H1 (cell line): ENCODE measurements at regions of chr14 and their contacts with region 1.

Region 1: DNA sequence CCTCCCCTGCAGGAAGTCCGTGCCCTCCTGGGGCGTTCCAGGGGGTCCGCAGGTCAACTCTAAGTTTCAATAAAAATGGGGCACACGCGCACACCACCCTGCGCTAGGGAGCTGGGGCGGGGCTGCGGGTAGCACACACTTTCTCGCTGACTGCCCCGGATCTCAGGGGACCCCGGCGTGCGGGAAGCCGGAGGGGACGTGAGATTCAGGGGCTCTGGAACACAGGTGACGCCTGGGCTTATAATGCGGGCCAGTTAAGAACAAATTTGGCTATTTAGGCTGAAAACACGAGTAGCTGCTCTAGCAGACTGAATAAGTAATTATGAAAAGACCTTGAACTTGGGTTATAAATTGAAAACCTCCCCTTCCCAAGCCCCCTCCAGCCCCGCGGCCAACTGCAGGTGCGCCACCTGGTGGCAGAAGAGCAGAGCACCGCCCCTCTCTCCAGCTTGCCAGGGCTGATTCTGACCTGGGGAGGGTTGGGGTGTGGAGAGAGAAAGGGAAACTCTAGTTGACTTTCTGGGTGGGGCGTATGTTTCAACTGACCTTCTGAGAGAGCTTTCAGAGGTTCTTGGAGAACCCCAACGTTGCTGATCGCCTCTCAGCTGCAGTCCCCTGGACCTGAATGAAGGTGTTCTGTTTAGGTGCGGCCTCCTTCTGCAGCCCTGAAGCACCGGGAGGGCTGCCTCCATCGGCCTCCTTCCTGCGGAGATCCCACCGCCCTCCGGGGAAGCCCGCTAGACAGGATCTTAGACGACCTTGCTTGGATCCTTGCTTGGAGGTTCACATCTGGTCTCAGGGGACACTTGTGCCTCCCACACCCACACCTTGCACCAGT is 118.4 kb upstream of the EVL start:
- DNase-seq: peak in 1 of 2 experiments; percentile 88
- H3K4me3 ChIP-seq: peak overlapping the region; percentile 14 to 55 (median 21); a peak in 5 of 8 replicates
- H3K27ac ChIP-seq: no peak overlapping the region
- H3K4me1 ChIP-seq: peaks cover 0 to 22% (median 4%) of the 10 kb centered on the region in 4 experiments; a peak in 5 of 7 replicates
- H3K27me3 ChIP-seq: 0 out of 7 replicates have a peak, but pooled peaks cover 0 to 3% (median 0%) of the 10 kb centered on the region in 4 experiments
- CTCF ChIP-seq: peak; percentile 83 to 96 (median 90)
- EP300 ChIP-seq: no peak
- POLR2A ChIP-seq: no peak
- RAD21 ChIP-seq: peak; percentile 52 to 70

Region 2: GRCh38 chr14:99807413-99808153 is 139.3 kb before region 1 on chr14:
- CTCF ChIA-PET with region 1: interaction called, 12 read pairs
- POLR2A ChIA-PET with region 1: no interaction called
- DNase-seq: no peak
- H3K4me3 ChIP-seq: no peak overlapping the region
- H3K27ac ChIP-seq: no peak overlapping the region
- H3K4me1 ChIP-seq: no peaks in the 10 kb centered on the region; a peak in 1 of 7 replicates
- H3K27me3 ChIP-seq: no peaks in the 10 kb centered on the region
- CTCF ChIP-seq: peak; percentile 59 to 93 (median 68)
- EP300 ChIP-seq: no peak
- POLR2A ChIP-seq: no peak
- RAD21 ChIP-seq: peak in 1 of 2 experiments; percentile 50; a peak in 3 of 4 replicates

Region 3: GRCh38 chr14:99910337-99911309 is 36.2 kb before region 1 on chr14:
- CTCF ChIA-PET with region 1: interaction called, 14 read pairs
- POLR2A ChIA-PET with region 1: no interaction called
- DNase-seq: no peak
- H3K4me3 ChIP-seq: no peak overlapping the region
- H3K27ac ChIP-seq: no peak overlapping the region
- H3K4me1 ChIP-seq: no peaks in the 10 kb centered on the region
- H3K27me3 ChIP-seq: no peaks in the 10 kb centered on the region
- CTCF ChIP-seq: no peak
- EP300 ChIP-seq: no peak
- POLR2A ChIP-seq: no peak
- RAD21 ChIP-seq: no peak

Region 4: GRCh38 chr14:99931308-99931707 is 15.6 kb before region 1 on chr14:
- CTCF ChIA-PET with region 1: interaction called, 10 read pairs
- POLR2A ChIA-PET with region 1: interaction called, 3 read pairs
- DNase-seq: no peak
- H3K4me3 ChIP-seq: no peak overlapping the region
- H3K27ac ChIP-seq: no peak overlapping the region
- H3K4me1 ChIP-seq: peaks cover 0 to 2% (median 0%) of the 10 kb centered on the region in 4 experiments; a peak in 1 of 7 replicates
- H3K27me3 ChIP-seq: no peaks in the 10 kb centered on the region
- CTCF ChIP-seq: no peak
- EP300 ChIP-seq: no peak
- POLR2A ChIP-seq: no peak
- RAD21 ChIP-seq: no peak

Region 5: GRCh38 chr14:99958380-99958779 is 11.5 kb after region 1 on chr14:
- CTCF ChIA-PET with region 1: interaction called, 24 read pairs
- POLR2A ChIA-PET with region 1: no interaction called
- DNase-seq: no peak
- H3K4me3 ChIP-seq: no peak overlapping the region
- H3K27ac ChIP-seq: no peak overlapping the region
- H3K4me1 ChIP-seq: no peaks in the 10 kb centered on the region
- H3K27me3 ChIP-seq: no peaks in the 10 kb centered on the region; a peak in 1 of 7 replicates
- CTCF ChIP-seq: no peak
- EP300 ChIP-seq: no peak
- POLR2A ChIP-seq: no peak
- RAD21 ChIP-seq: no peak